Breast epithelium (tissue), 4 donors: ENCODE measurements at regions of chr18 and their contacts with region 1.

Region 1: DNA sequence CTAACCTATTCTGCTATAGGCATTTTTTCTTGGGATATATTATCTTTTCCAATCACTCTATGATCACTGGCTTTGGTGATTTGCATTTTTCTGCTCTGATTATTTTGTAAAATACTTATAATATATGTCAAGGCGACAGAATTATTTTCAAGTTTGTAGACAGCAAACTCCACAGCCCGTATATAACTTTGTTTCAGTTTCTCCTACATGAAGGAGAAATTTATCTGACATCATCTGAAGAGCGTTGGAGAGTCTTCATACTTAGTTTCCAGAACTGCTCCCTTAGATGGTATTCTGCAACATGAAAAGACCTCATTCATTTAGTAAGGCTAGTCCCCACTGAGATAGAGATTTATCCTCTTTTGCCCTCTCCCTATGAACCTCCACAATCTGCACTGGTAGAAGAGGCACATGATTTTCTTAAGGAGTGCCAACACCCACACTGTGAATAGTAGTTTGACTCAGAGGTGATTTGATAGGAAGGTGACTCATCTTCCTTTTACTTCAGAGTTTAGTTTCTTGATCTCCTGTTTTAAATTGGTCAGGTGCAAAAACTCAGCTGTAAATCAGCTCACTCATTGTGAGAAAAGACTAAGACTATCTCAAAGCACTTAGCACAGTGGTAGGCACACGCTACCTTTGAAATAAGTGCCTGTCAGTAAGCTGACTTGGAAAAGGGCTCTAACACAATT is 1848.6 kb upstream of the CELF4 start:
- DNase-seq: no peak
- H3K4me3 ChIP-seq: no peak overlapping the region
- H3K27ac ChIP-seq: no peak overlapping the region
- H3K4me1 ChIP-seq: no peaks in the 10 kb centered on the region
- H3K27me3 ChIP-seq: no peaks in the 10 kb centered on the region
- CTCF ChIP-seq: no peak
- POLR2A ChIP-seq: no peak

Region 2: GRCh38 chr18:39441648-39442047 is 27.5 kb after region 1 on chr18:
- intact Hi-C with region 1: no loop called
- DNase-seq: no peak
- H3K4me3 ChIP-seq: no peak overlapping the region
- H3K27ac ChIP-seq: no peak overlapping the region
- H3K4me1 ChIP-seq: no peaks in the 10 kb centered on the region
- H3K27me3 ChIP-seq: no peaks in the 10 kb centered on the region
- CTCF ChIP-seq: no peak
- POLR2A ChIP-seq: no peak

Region 3: DNA sequence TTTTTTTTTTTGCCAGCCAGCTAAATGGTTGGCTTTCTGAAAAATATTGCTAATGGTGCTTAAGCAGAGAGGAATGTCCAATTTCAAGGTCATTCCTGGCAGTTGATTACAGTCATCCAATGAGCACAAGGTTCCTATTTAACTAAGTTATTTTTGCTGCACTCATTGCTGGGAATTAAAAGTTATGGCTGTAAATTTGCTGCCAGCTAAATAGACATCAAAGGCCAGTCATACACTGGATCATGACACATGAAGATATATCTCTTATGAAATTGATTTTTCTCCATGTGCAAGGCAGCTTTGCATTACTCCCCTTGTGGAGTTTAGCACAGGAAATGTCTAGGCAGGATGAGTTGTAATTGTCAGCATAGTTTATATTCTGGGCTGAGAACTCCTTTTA is 49.9 kb after region 1 on chr18:
- intact Hi-C with region 1: loop called (anchors 2 kb)
- DNase-seq: no peak
- H3K4me3 ChIP-seq: no peak overlapping the region
- H3K27ac ChIP-seq: no peak overlapping the region
- H3K4me1 ChIP-seq: no peaks in the 10 kb centered on the region
- H3K27me3 ChIP-seq: no peaks in the 10 kb centered on the region
- CTCF ChIP-seq: no peak
- POLR2A ChIP-seq: no peak

Region 4: DNA sequence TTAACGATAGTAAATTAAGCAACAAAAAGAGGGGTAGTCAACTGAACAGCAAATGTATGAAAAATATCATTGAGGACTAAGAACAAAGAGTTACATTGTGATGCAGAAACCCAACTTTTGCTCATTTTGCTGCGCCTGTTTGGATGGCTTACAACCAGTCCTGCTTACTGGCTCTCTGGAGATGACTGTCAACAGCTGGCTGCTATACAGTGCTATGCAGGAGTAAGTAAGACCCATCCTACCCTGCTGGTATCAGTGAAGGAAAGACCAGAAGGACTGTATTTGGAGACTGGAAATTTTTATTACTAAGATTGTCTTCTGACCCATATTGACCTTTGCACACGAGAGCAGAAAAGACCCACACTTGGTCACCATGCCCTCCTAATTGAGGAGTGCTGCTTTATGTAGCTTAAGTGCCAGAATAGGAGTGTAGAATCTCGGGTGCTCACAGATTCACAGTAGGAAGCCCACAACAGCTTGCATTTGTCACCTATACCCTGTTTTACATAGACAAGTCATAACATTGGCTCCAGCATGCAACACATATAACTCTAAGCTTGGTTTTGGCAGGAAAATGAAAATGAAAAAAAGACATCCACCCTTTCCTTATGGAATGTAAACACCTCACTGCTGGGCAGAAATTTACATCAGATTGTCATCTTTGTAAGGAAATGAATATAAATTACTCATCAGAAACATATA is 66.5 kb after region 1 on chr18:
- intact Hi-C with region 1: no loop called
- DNase-seq: no peak
- H3K4me3 ChIP-seq: no peak overlapping the region
- H3K27ac ChIP-seq: no peak overlapping the region
- H3K4me1 ChIP-seq: no peaks in the 10 kb centered on the region
- H3K27me3 ChIP-seq: no peaks in the 10 kb centered on the region
- CTCF ChIP-seq: no peak
- POLR2A ChIP-seq: no peak